Uterus (tissue), 4 donors: ENCODE measurements at regions of chr11 and their contacts with region 1.

Region 1: DNA sequence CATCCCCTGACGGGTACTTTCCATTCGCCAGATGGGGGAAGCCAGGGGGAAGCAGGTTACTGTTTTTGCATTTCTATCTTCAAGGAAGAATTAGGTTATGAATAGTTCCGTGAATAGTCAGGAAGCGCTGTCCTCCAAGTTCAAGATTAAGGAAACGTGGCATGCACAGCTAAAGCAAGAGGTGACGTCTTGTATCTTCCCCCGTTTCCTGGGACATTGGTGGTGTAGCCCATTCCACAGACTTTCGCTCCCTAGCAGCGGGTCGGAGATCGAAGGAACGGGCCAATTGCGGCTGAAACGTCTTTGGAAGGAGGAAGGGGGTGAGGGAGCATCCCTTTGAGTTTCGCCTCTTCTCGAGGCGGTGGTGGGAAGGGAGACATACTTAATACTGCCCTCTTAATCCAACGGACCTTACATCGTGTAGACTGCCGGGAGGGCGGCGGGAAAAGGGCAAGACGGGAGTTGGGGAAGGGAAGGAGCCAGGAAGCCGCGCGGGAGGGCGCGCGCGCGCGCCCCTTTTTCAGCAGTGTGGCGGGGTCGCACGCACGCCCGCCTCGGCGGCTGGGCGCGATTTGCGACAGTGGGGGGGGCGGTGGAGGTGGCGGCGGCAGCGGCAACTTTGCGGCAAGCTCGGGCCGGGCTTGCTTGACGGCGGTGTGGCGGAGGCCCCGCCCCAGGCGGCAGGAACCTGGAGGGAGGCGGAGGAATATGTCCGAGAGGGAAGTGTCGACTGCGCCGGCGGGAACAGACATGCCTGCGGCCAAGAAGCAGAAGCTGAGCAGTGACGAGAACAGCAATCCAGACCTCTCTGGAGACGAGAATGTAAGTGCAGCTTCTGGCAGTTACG is at the start of gene EED:
- DNase-seq: peak; percentile 94 to 96
- H3K4me3 ChIP-seq: peak within 1 kb of the TSS; percentile 74 to 84
- H3K27ac ChIP-seq: peak within 1 kb of the TSS; percentile 99 to 100
- H3K4me1 ChIP-seq: peaks cover 0 to 6% of the 10 kb centered on the region in 2 donors
- H3K27me3 ChIP-seq: no peaks in the 10 kb centered on the region
- CTCF ChIP-seq: no peak
- POLR2A ChIP-seq: peak; percentile 50 to 69
- total RNA-seq, gene EED: 16.4 to 53.8 (median 31.3) TPM

Region 2: DNA sequence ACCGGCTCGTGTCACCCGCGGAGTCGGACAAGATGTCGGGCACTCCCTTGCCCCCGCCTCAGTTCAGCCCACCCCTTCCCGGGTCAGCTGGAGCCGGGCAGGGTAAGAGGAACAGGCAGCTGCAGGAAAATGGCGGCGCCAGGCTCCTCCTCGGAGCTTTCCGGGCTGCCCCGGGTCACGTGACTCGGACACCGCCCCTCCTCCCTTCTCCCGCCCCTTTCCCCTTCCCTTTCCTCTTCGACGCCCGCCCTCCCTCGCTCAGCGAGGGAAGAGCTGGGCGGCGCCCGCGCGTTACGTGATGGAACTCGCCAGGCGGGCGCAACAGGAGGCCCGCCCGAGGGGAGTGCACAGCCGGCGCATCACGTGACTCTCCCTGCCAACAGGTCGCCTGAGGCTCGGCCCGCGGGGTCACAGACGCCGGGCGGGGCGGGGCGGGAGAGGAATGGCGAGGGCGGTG is 175.8 kb before region 1 on chr11 and contains the start of gene PICALM:
- intact Hi-C with region 1: loop called (anchors 10 kb)
- DNase-seq: peak; percentile 98
- H3K4me3 ChIP-seq: peak within 1 kb of the TSS; percentile 93 to 94
- H3K27ac ChIP-seq: peak within 1 kb of the TSS; percentile 96 to 98
- H3K4me1 ChIP-seq: no peaks in the 10 kb centered on the region
- H3K27me3 ChIP-seq: no peaks in the 10 kb centered on the region
- CTCF ChIP-seq: peak in 2 of 4 experiments; percentile 17 to 22
- POLR2A ChIP-seq: peak; percentile 80 to 82
- total RNA-seq, gene PICALM: 198 to 402 (median 298) TPM

Region 3: GRCh38 chr11:86314646-86315045 is 69.9 kb after region 1 on chr11:
- intact Hi-C with region 1: no loop called
- DNase-seq: no peak
- H3K4me3 ChIP-seq: no peak overlapping the region
- H3K27ac ChIP-seq: no peak overlapping the region
- H3K4me1 ChIP-seq: no peaks in the 10 kb centered on the region
- H3K27me3 ChIP-seq: no peaks in the 10 kb centered on the region
- CTCF ChIP-seq: no peak
- POLR2A ChIP-seq: no peak